ENCODE measurements at regions of chr16 and their contacts with region 1.

Region 1: GRCh38 chr16:86072328-86073102 is 173.6 kb downstream of the IRF8 start:
- DNase-seq: peak; percentile 78
- ATAC-seq: peak; percentile 75
- H3K4me3 Mint-ChIP-seq: no peak overlapping the region
- H3K27ac Mint-ChIP-seq: no peak overlapping the region
- H3K4me1 Mint-ChIP-seq: peaks cover 10% of the 10 kb centered on the region
- H3K27me3 Mint-ChIP-seq: no peaks in the 10 kb centered on the region
- CTCF ChIP-seq: peak; percentile 58

Region 2: DNA sequence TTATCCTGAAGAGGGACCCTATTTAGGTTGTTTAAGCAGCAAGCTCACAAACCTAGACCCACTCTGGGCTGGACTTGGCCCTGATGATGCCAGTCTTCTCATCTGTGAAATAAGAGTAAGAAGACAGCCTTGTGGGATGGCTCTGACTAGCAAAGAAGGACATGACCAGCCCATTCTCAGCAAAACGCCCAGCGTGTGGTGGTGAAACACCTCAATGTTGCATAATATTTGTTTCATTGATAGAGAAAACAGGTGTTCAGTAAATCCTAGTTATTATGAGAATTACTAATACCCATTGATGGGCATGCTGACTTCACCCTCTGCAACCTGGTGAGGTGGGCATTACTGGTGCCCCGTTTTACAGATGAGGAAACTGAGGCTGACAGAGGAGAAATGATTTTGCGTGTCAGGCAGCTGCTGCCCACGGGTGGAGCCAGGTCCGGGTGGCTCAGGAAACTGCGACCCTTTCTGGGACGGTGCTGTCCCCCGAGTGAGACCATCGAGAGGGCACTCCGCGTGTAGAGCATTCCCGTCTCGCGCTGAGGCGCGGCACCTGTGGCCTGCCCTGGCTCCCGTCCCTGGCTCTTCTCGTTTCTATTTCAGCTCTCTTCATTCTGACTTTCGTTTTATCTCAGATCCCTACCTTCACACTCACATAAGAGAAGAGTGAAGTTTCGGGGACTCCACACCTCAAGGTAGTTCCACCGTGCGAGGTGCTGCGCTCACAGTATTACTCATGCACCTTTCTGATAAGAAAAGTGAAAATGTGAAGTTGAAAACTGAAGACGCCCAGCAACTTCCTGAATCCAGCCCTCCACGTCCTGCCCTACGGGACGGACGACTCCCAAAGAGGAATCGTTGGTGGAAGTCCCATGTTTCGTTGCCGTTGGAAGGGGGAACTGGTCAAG is 125.0 kb before region 1 on chr16:
- CTCF ChIA-PET with region 1: no interaction called
- POLR2A ChIA-PET with region 1: no interaction called
- DNase-seq: no peak
- ATAC-seq: no peak
- H3K4me3 Mint-ChIP-seq: no peak overlapping the region
- H3K27ac Mint-ChIP-seq: no peak overlapping the region
- H3K4me1 Mint-ChIP-seq: no peaks in the 10 kb centered on the region
- H3K27me3 Mint-ChIP-seq: peaks cover 4% of the 10 kb centered on the region
- CTCF ChIP-seq: no peak

Region 3: DNA sequence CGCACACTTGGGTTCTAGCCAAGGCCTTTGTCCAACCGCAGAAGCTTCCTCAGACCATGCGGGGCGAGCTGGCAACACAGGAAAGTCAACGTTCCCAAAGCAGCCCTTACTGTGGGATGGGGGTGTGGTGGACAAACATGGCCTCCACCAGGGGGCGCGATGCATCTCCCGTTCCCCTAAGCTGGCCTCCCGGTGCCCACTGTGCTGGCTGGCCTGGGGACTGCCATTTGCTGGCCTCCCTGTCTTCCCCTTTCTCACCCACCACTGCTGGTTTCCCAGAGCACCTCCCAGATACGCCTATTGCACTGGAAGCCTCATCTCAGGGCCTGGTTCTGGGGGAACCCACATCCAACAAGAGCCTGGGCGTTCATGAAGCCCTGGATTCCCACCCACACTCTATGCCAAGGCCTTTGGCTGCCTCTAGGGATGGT is 28.3 kb before region 1 on chr16:
- CTCF ChIA-PET with region 1: interaction called, 10 read pairs
- POLR2A ChIA-PET with region 1: no interaction called
- DNase-seq: peak; percentile 85
- ATAC-seq: peak; percentile 91
- H3K4me3 Mint-ChIP-seq: no peak overlapping the region
- H3K27ac Mint-ChIP-seq: no peak overlapping the region
- H3K4me1 Mint-ChIP-seq: peaks cover 12% of the 10 kb centered on the region
- H3K27me3 Mint-ChIP-seq: no peaks in the 10 kb centered on the region; the same call in 1 of the 2 replicates
- CTCF ChIP-seq: peak; percentile 90

Region 4: GRCh38 chr16:86087896-86088230 is 15.3 kb after region 1 on chr16:
- CTCF ChIA-PET with region 1: interaction called, 12 read pairs
- POLR2A ChIA-PET with region 1: no interaction called
- DNase-seq: no peak
- ATAC-seq: no peak
- H3K4me3 Mint-ChIP-seq: no peak overlapping the region
- H3K27ac Mint-ChIP-seq: no peak overlapping the region
- H3K4me1 Mint-ChIP-seq: peaks cover 15% of the 10 kb centered on the region
- H3K27me3 Mint-ChIP-seq: no peaks in the 10 kb centered on the region
- CTCF ChIP-seq: no peak

Region 5: GRCh38 chr16:86285938-86286921 is 213.7 kb after region 1 on chr16:
- CTCF ChIA-PET with region 1: interaction called, 10 read pairs
- POLR2A ChIA-PET with region 1: no interaction called
- DNase-seq: no peak
- ATAC-seq: peak; percentile 6; the same call in 1 of the 2 replicates
- H3K4me3 Mint-ChIP-seq: peak overlapping the region; percentile 78
- H3K27ac Mint-ChIP-seq: no peak overlapping the region
- H3K4me1 Mint-ChIP-seq: peaks cover 70% of the 10 kb centered on the region
- H3K27me3 Mint-ChIP-seq: peaks cover 100% of the 10 kb centered on the region
- CTCF ChIP-seq: no peak

Measured in WTC11 (cell line).